Activated CD8-positive, alpha-beta T cell treated with anti-CD3 and anti-CD28 coated beads for 36 hours (primary cell): ENCODE measurements at regions of chr9 and their contacts with region 1.

Region 1: GRCh38 chr9:33446946-33447798 is at the start of gene AQP3:
- DNase-seq: peak; percentile 76
- ATAC-seq: peak; percentile 68
- H3K4me3 Mint-ChIP-seq: peak within 1 kb of the TSS; percentile 66
- H3K27ac Mint-ChIP-seq: peak within 1 kb of the TSS; percentile 88
- H3K4me1 Mint-ChIP-seq: peaks cover 39% of the 10 kb centered on the region
- H3K27me3 Mint-ChIP-seq: no peaks in the 10 kb centered on the region
- CTCF ChIP-seq: peak; percentile 39
- total RNA-seq, gene AQP3: 1.2 to 2.6 TPM

Region 2: GRCh38 chr9:33458444-33458843 is 11.3 kb after region 1 on chr9:
- CTCF ChIA-PET with region 1: interaction called, 83 read pairs
- POLR2A ChIA-PET with region 1: interaction called, 15 read pairs
- intact Hi-C with region 1: loop called (anchors 2 kb)
- DNase-seq: peak; percentile 85
- ATAC-seq: peak; percentile 87
- H3K4me3 Mint-ChIP-seq: peak overlapping the region; percentile 8
- H3K27ac Mint-ChIP-seq: peak overlapping the region; percentile 90
- H3K4me1 Mint-ChIP-seq: peaks cover 53% of the 10 kb centered on the region
- H3K27me3 Mint-ChIP-seq: no peaks in the 10 kb centered on the region
- CTCF ChIP-seq: no peak

Region 3: DNA sequence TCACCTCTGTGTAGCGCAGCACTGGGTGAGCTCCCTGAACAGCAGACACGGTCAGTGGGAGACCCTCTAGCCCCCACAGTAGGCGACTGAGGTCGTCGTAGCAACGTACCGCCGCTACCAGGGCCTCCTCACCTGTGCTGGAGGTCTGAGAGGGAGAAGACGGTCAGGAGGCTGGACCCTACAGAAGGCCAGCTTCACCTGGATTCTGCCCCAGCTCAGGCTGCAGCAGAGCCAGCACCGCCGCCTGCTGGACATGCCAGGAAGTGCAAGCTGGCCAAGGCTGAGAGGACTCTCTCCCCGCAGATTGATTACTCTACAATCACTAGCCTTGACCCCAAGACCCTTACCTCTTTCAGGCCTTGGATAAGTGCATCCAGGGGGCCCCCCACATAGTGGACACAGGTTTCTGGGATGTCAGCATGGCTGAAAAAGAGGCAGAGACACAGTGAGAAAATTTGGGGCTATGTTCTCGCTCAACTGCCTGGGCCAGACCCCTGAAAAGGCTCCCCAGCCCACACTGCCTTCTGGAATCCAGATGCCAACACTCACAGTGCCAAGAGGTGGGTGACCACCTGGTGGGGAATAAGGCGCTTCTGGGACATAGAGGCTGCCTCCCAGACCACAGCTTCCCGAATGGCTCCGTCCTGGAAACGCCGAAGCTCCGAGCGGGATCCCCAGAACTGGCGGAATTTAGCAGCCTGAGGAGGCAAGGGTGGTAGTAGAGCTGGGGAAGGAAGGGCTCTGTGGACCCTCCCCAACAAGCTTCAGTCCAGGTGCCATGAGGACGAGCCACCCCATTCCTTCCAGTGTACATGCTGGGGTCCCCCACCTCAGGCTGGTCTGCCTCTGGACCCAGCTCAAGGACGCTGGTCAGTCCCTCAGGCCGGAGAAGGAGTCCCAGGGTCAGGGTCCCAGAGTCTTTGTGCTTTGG is 19.7 kb after region 1 on chr9:
- CTCF ChIA-PET with region 1: interaction called, 83 read pairs
- POLR2A ChIA-PET with region 1: interaction called, 6 read pairs
- intact Hi-C with region 1: loop called (anchors 2 kb)
- DNase-seq: peak; percentile 82
- ATAC-seq: peak; percentile 91
- H3K4me3 Mint-ChIP-seq: no peak overlapping the region
- H3K27ac Mint-ChIP-seq: no peak overlapping the region
- H3K4me1 Mint-ChIP-seq: peaks cover 10% of the 10 kb centered on the region
- H3K27me3 Mint-ChIP-seq: no peaks in the 10 kb centered on the region
- CTCF ChIP-seq: peak; percentile 97

Region 4: GRCh38 chr9:33473643-33474352 is 26.6 kb after region 1 on chr9 and contains the start of gene NOL6:
- CTCF ChIA-PET with region 1: interaction called, 65 read pairs
- POLR2A ChIA-PET with region 1: interaction called, 4 read pairs
- intact Hi-C with region 1: no loop called
- DNase-seq: peak; percentile 99
- ATAC-seq: peak; percentile 100
- H3K4me3 Mint-ChIP-seq: peak within 1 kb of the TSS; percentile 89
- H3K27ac Mint-ChIP-seq: peak within 1 kb of the TSS; percentile 94
- H3K4me1 Mint-ChIP-seq: peaks cover 23% of the 10 kb centered on the region
- H3K27me3 Mint-ChIP-seq: no peaks in the 10 kb centered on the region
- CTCF ChIP-seq: no peak
- total RNA-seq, gene NOL6: 45.5 to 45.9 TPM